Thyroid gland (tissue), 4 donors: ENCODE measurements at regions of chr12 and their contacts with region 1.

Region 1: GRCh38 chr12:17778242-17778641 is 311.8 kb downstream of the RERGL start:
- DNase-seq: no peak
- H3K4me3 ChIP-seq: no peak overlapping the region
- H3K27ac ChIP-seq: no peak overlapping the region
- H3K4me1 ChIP-seq: no peaks in the 10 kb centered on the region
- H3K27me3 ChIP-seq: no peaks in the 10 kb centered on the region
- CTCF ChIP-seq: no peak
- POLR2A ChIP-seq: no peak

Region 2: DNA sequence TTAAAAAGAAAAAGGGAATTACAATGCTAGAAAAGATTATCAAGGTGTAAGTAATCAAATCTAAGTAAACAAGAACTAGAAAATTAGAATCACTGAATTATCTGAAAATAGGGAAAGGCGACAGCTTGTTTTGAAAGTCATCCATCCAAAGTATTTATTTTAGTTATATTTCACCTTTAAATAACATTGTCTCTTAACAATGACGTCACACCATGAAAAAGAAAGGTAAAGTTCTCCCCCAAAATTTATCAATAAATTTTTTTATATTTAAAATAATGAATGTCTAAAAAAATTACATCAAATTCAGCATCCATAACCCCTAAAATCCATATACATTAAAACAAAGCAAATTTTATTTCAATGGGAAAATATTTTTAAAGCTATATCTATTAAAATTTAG is 88.6 kb after region 1 on chr12:
- intact Hi-C with region 1: loop called (anchors 5 kb)
- DNase-seq: no peak
- H3K4me3 ChIP-seq: no peak overlapping the region
- H3K27ac ChIP-seq: no peak overlapping the region
- H3K4me1 ChIP-seq: no peaks in the 10 kb centered on the region
- H3K27me3 ChIP-seq: no peaks in the 10 kb centered on the region
- CTCF ChIP-seq: no peak
- POLR2A ChIP-seq: no peak

Region 3: DNA sequence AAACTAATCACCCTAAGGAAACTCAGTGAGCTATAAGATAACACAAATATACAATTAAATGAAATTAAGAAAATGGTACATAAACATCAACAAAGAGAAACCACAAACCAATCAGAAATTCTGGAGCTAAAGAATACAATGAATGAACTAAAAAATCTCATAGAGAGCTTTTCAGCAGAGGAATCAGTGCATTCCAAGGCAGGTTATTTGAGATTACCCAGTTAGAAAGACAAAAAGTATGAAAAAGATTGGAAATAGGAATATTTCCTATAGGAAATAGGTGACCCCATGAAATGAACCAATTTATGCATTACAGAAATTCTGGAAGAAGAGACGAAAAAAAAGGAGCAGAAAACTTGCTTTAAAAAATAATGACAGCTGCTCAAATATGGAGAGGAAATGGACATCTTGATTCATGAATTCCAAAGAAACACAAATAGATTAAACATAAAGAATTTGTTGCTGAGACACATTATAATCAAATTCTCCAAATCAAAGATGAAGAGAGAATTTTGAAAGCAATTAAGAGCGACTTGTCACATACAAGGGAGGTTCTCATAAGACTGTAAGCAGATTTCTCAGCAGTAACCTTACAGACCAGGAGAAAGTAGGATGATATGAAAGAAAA is 221.0 kb after region 1 on chr12:
- intact Hi-C with region 1: no loop called
- DNase-seq: no peak
- H3K4me3 ChIP-seq: no peak overlapping the region
- H3K27ac ChIP-seq: no peak overlapping the region
- H3K4me1 ChIP-seq: no peaks in the 10 kb centered on the region
- H3K27me3 ChIP-seq: no peaks in the 10 kb centered on the region
- CTCF ChIP-seq: no peak
- POLR2A ChIP-seq: no peak